ENCODE measurements at regions of chr3 and their contacts with region 1.

Region 1: DNA sequence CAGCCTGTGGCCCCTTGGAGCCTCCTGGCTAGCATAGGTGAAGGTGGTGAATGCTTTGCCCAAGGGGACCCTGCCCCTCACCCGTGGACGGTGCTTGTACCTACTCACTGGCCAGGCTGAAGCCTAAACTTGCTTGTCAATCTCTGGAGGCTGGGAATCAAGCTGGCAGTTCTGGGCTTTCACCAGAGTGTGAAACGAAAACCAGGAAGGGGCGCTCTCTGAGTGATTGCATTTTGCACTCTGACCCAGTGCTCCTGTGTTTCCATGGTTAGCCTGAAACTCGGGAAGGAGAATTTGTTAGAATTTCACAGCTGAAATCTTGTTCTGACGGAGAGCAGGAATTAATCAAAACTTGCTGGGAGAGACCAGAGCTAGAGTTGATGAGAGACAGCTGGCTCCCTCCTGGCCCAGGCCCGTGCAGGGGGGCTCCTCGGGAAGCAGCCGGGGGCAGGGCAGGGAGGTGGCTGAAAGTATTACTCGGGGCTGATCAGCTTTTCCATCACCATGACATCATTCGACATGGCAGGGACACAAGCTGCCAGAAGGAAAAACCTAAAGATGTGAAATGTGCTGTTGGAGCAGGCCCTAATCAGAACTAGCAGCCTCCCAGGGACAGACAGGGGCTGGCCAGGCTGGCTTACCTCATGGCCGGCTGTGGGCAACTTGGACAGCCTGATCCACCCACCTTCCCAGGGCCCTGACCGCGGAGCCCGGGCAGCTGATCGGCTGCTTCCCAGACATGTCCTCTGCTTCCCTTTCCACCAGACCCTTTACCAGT is 323.6 kb upstream of the CTDSPL start:
- DNase-seq: no peak
- ATAC-seq: peak; percentile 42
- H3K4me3 ChIP-seq: no peak overlapping the region
- H3K27ac ChIP-seq: peak overlapping the region; percentile 5 to 90
- H3K4me1 ChIP-seq: peaks cover 0 to 5% of the 10 kb centered on the region in 2 donors
- H3K27me3 ChIP-seq: no peaks in the 10 kb centered on the region

Region 2: GRCh38 chr3:37504583-37505357 is 33.3 kb before region 1 on chr3:
- intact Hi-C with region 1: loop called in 1 of 2 experiments (anchors 5 kb)
- DNase-seq: no peak
- ATAC-seq: no peak
- H3K4me3 ChIP-seq: no peak overlapping the region
- H3K27ac ChIP-seq: no peak overlapping the region
- H3K4me1 ChIP-seq: peaks cover 9% of the 10 kb centered on the region in 2 donors
- H3K27me3 ChIP-seq: no peaks in the 10 kb centered on the region

Region 3: DNA sequence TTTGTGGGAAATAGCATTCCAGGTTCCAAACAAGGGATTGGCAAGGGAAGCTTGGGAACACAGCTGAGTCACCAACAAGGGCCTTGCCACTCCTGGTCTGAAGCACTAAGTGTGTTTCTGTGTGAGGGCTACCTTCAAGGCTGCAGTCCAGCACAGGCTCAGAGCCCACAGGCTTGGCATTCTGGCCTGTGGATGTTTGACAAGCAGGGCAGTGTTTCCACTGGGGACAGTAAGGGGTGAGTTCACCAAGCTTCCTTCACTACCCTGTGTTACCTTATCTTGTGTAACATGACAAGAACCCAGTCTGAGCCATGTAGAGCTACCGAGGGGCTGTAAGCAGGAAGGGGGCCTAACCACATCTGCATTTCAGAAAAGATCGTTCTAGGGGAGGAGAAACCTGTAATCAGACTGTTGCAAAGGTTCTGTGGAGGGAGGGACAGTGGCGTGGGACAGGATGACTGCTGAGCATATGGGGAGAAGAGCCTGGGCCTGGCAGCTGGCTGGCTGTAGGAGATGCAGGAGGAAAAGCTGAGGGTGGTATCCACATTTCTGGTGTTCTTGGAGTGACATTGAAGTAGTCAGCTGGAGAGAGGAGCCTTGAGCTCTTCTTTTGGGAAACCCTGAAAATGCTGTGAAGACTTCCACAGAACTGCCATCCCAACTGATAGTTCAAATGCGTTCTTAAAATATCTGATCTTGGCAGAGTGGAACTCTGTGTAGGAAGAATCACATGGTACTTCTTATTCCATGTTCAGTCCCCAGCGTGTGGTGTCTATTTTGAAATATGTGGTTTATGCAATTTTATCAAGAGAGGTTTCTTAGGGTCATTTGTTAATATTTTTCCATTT is 384.8 kb after region 1 on chr3:
- intact Hi-C with region 1: no loop called
- DNase-seq: peak; percentile 67 to 79
- ATAC-seq: peak; percentile 79
- H3K4me3 ChIP-seq: no peak overlapping the region
- H3K27ac ChIP-seq: peak overlapping the region; percentile 87 to 91
- H3K4me1 ChIP-seq: peaks cover 6% of the 10 kb centered on the region in 2 donors
- H3K27me3 ChIP-seq: no peaks in the 10 kb centered on the region

Measured in aorta (tissue), 5 donors.